Aorta (tissue), 5 donors: ENCODE measurements at regions of chr9 and their contacts with region 1.

Region 1: DNA sequence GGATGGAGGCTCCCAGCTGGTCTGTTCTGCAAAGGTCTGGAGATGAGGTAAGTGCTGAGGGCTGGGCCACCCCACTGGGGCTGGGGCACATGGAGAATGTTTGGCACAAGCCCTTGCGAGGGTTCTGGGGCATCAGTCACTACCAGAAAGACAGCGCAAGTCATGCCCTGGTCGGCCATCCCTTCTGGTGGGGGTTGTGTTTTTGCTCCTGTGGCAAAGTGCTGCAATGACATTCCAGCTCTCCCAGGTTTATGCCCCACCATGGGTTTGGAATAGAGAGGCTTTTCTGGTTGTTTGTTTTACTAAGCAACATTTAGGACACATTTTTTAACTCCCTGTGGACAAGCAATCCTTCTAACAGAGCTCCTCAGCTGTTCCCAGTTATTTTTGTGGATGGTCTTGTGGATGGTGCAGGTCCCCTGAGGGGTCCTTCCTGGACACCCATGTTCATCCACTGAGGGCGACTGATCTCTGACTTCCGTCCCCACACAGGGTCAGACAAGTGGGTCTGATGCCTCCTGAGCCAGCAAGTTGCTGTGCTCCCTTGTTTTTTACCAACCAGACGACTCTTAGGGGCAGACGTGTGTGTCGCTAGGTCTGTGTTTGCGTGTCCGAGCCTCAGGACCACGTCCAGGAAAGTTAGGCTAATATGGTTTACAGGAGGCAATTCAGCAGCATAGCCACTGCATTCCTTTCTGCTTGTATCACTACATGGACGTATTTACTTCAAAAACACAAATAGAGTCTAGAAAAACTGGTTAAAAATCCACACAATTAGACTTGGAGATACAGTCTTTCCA is 64.9 kb upstream of the ECM2 start:
- DNase-seq: peak in 1 of 2 donors; percentile 61
- ATAC-seq: peak; percentile 76
- H3K4me3 ChIP-seq: no peak overlapping the region
- H3K27ac ChIP-seq: peak overlapping the region; percentile 81 to 95
- H3K4me1 ChIP-seq: no peaks in the 10 kb centered on the region
- H3K27me3 ChIP-seq: no peaks in the 10 kb centered on the region

Region 2: DNA sequence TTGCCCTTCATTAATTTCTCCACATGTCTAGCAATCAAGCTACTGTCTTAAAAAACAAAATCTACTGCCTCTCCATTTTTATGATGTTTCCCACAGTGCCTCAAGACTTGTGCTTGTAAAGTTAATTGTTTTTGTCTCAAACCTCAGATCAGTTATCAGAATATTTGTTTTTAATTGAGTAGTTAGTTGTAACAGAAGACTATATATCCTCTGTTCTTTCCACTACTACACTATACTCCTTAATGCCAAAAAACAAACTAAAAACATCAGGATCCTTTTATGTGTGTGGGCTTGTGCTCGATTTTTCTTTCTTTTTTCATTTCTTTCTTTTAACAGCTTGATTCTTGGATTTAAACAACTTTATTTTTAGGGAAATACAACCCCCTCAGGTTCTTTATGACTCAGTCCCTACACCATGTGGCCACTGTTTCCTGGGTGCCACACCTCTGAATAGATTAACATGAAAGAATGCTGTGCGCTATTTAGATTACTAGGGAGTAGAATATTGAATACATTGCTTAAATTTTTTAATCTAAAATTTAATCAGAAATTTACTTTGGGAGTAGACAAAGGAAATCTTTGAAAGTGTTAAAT is 119.5 kb before region 1 on chr9:
- intact Hi-C with region 1: loop called (anchors 5 kb)
- DNase-seq: no peak
- ATAC-seq: no peak
- H3K4me3 ChIP-seq: peak overlapping the region; percentile 31 to 54
- H3K27ac ChIP-seq: peak overlapping the region; percentile 28 to 82
- H3K4me1 ChIP-seq: peaks cover 3 to 7% of the 10 kb centered on the region in 2 donors
- H3K27me3 ChIP-seq: no peaks in the 10 kb centered on the region

Region 3: DNA sequence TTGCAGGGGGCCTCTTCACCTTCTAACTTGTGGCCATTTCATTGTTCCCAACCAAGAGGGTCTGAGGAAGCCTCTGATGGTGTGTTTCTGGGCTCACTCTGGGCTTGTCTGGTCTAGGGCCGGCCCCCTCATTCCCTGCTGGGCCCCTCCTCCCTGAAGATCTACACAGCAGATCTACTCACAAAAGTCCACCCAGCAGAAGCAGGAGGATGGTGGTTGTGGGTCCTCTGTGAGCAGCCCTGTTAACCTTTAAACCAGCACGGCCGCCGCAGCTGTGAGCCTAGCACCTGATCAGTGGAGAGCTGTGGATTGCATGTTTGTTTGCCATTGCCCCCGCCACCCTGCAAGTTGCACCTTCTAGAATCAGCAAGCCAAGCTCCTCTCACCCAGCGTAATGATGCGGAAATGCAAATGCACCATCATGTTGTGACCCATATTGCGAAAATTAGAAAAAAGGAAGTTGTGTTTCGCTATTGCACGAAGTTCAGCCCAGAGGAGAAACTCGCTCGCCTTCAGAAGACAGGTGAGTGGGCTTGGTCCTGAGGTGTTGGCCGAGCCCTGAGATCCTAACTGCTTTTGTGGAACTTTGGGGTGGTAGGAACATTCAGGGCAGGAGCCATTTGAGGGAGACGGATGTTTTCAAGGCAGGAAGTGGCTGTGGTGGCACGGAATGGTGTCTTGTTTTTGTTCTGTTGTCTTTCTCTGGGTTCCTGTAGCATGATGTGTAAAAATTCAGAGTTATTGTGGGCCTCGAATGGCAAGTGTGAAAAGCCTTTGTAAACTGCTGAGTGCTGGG is 363.4 kb after region 1 on chr9:
- intact Hi-C with region 1: no loop called
- DNase-seq: peak in 1 of 2 donors; percentile 64
- ATAC-seq: peak; percentile 31
- H3K4me3 ChIP-seq: no peak overlapping the region
- H3K27ac ChIP-seq: no peak overlapping the region
- H3K4me1 ChIP-seq: no peaks in the 10 kb centered on the region
- H3K27me3 ChIP-seq: no peaks in the 10 kb centered on the region